H1 (cell line): ENCODE measurements at regions of chr3 and their contacts with region 1.

Region 1: GRCh38 chr3:149120051-149120972 is 9.1 kb upstream of the HPS3 start:
- DNase-seq: no peak
- H3K4me3 ChIP-seq: no peak overlapping the region
- H3K27ac ChIP-seq: no peak overlapping the region
- H3K4me1 ChIP-seq: no peaks in the 10 kb centered on the region
- H3K27me3 ChIP-seq: no peaks in the 10 kb centered on the region
- CTCF ChIP-seq: peak in 2 of 3 experiments; percentile 49 to 60; a peak in 2 of 4 replicates
- EP300 ChIP-seq: no peak
- POLR2A ChIP-seq: no peak
- RAD21 ChIP-seq: peak; percentile 85 to 86

Region 2: GRCh38 chr3:149009732-149010131 is 110.6 kb before region 1 on chr3:
- CTCF ChIA-PET with region 1: no interaction called
- POLR2A ChIA-PET with region 1: no interaction called
- DNase-seq: no peak
- H3K4me3 ChIP-seq: no peak overlapping the region
- H3K27ac ChIP-seq: no peak overlapping the region
- H3K4me1 ChIP-seq: peaks cover 0 to 5% (median 2%) of the 10 kb centered on the region in 4 experiments; a peak in 2 of 7 replicates
- H3K27me3 ChIP-seq: no peaks in the 10 kb centered on the region
- CTCF ChIP-seq: no peak
- EP300 ChIP-seq: no peak
- POLR2A ChIP-seq: no peak
- RAD21 ChIP-seq: no peak

Region 3: DNA sequence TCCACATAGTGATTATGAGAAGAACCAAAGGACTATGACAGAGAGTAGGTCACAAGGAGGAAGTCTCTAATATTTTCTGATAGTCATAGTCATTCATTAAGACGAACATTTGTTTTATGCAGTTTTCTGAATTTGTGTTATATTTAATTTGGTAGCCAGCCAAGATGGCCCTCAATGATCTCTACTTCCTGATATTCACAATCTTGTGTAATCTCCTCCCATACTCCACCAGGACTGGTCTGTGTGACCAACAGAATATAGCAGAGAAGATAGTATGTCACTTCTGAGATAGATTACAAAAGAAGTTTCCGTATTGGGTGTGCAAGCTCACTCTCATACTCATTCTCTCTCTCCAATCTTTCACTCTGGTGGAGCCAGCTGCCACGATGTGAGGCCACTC is 64.7 kb before region 1 on chr3:
- CTCF ChIA-PET with region 1: no interaction called
- POLR2A ChIA-PET with region 1: no interaction called
- DNase-seq: no peak
- H3K4me3 ChIP-seq: no peak overlapping the region
- H3K27ac ChIP-seq: no peak overlapping the region
- H3K4me1 ChIP-seq: no peaks in the 10 kb centered on the region
- H3K27me3 ChIP-seq: no peaks in the 10 kb centered on the region
- CTCF ChIP-seq: no peak
- EP300 ChIP-seq: no peak
- POLR2A ChIP-seq: no peak
- RAD21 ChIP-seq: no peak

Region 4: DNA sequence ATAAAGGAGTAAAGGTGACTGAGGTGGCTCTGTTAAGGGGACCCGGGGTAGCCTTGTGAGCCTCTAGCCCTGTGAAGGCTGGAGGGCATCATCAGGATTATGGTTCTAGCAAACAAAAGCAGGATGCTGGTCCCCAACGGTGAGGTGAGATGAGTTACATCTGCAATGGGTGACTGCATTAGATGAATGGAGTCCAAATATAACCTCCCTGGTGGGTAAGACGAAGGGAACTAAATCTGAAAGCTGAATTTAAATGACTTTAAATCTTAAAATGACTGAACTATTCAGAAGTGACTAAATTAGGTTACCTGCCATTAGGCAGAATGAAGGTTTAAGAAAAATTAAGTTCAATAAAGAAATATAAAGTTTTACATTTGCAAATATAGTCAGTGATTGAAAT is 29.4 kb before region 1 on chr3:
- CTCF ChIA-PET with region 1: interaction called, 10 read pairs
- POLR2A ChIA-PET with region 1: no interaction called
- DNase-seq: no peak
- H3K4me3 ChIP-seq: no peak overlapping the region
- H3K27ac ChIP-seq: no peak overlapping the region
- H3K4me1 ChIP-seq: peaks cover 0 to under 1% (median 0%) of the 10 kb centered on the region in 4 experiments; a peak in 3 of 7 replicates
- H3K27me3 ChIP-seq: peaks cover 0 to 8% (median 2%) of the 10 kb centered on the region in 4 experiments; a peak in 4 of 7 replicates
- CTCF ChIP-seq: no peak
- EP300 ChIP-seq: no peak
- POLR2A ChIP-seq: no peak
- RAD21 ChIP-seq: no peak

Region 5: GRCh38 chr3:149267565-149267964 is 147.3 kb after region 1 on chr3:
- CTCF ChIA-PET with region 1: interaction called, 50 read pairs
- POLR2A ChIA-PET with region 1: no interaction called
- DNase-seq: no peak
- H3K4me3 ChIP-seq: no peak overlapping the region
- H3K27ac ChIP-seq: no peak overlapping the region
- H3K4me1 ChIP-seq: no peaks in the 10 kb centered on the region
- H3K27me3 ChIP-seq: no peaks in the 10 kb centered on the region
- CTCF ChIP-seq: no peak
- EP300 ChIP-seq: no peak
- POLR2A ChIP-seq: no peak
- RAD21 ChIP-seq: no peak

Region 6: GRCh38 chr3:149280671-149281349 is 160.5 kb after region 1 on chr3:
- CTCF ChIA-PET with region 1: interaction called, 46 read pairs
- POLR2A ChIA-PET with region 1: no interaction called
- DNase-seq: no peak
- H3K4me3 ChIP-seq: no peak overlapping the region
- H3K27ac ChIP-seq: no peak overlapping the region
- H3K4me1 ChIP-seq: no peaks in the 10 kb centered on the region
- H3K27me3 ChIP-seq: no peaks in the 10 kb centered on the region
- CTCF ChIP-seq: no peak
- EP300 ChIP-seq: no peak
- POLR2A ChIP-seq: no peak
- RAD21 ChIP-seq: no peak

Region 7: DNA sequence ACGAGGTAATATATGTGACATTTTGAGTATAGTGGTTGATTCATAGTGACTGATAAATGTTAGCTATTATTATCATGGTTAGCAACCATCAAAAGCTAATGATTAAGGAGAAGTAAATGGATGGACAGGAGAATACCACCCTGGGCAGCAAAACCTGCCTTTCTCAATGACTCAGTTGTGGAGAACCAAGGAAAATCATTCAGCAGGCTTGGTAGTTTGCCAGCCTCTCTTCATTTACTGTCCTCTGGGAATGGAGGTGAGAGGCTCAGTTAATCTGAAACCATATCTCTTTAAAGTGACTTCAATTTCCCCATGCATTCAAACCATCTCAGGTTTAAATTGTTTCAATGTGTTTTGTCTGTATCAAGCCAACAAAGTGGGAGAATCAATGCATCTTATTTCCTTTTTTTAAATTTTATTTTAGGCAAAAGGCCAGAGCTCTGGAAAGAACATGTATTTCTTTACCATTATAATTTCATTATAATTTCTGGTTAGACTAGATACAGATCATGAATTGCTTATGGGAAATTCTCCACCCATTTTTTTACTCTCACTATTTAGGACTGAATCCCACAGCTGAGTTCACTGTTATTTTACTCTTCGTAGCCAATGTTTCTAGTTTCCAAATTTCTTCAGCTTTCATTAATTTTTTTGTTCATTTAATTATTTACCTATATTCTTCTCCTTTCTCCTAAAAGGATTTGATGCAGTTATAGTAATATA is 210.5 kb after region 1 on chr3:
- CTCF ChIA-PET with region 1: interaction called, 19 read pairs
- POLR2A ChIA-PET with region 1: no interaction called
- DNase-seq: no peak
- H3K4me3 ChIP-seq: no peak overlapping the region
- H3K27ac ChIP-seq: no peak overlapping the region
- H3K4me1 ChIP-seq: peaks cover 0 to 9% (median 3%) of the 10 kb centered on the region in 4 experiments; a peak in 4 of 7 replicates
- H3K27me3 ChIP-seq: no peaks in the 10 kb centered on the region
- CTCF ChIP-seq: no peak
- EP300 ChIP-seq: no peak
- POLR2A ChIP-seq: no peak
- RAD21 ChIP-seq: no peak

Region 8: GRCh38 chr3:149480325-149481017 is 360.2 kb after region 1 on chr3:
- CTCF ChIA-PET with region 1: interaction called, 18 read pairs
- POLR2A ChIA-PET with region 1: no interaction called
- DNase-seq: peak; percentile 80 to 90
- H3K4me3 ChIP-seq: no peak overlapping the region
- H3K27ac ChIP-seq: no peak overlapping the region
- H3K4me1 ChIP-seq: no peaks in the 10 kb centered on the region
- H3K27me3 ChIP-seq: no peaks in the 10 kb centered on the region
- CTCF ChIP-seq: peak; percentile 90 to 95 (median 92)
- EP300 ChIP-seq: no peak
- POLR2A ChIP-seq: no peak
- RAD21 ChIP-seq: peak; percentile 93 to 95